ENCODE measurements at regions of chr2 and their contacts with region 1.

Region 1: GRCh38 chr2:118865106-118865505 is 17.7 kb upstream of the EN1 start:
- DNase-seq: peak; percentile 84
- H3K4me3 ChIP-seq: no peak overlapping the region
- H3K27ac ChIP-seq: no peak overlapping the region
- H3K4me1 ChIP-seq: peaks cover 19% of the 10 kb centered on the region
- H3K27me3 ChIP-seq: no peaks in the 10 kb centered on the region

Region 2: DNA sequence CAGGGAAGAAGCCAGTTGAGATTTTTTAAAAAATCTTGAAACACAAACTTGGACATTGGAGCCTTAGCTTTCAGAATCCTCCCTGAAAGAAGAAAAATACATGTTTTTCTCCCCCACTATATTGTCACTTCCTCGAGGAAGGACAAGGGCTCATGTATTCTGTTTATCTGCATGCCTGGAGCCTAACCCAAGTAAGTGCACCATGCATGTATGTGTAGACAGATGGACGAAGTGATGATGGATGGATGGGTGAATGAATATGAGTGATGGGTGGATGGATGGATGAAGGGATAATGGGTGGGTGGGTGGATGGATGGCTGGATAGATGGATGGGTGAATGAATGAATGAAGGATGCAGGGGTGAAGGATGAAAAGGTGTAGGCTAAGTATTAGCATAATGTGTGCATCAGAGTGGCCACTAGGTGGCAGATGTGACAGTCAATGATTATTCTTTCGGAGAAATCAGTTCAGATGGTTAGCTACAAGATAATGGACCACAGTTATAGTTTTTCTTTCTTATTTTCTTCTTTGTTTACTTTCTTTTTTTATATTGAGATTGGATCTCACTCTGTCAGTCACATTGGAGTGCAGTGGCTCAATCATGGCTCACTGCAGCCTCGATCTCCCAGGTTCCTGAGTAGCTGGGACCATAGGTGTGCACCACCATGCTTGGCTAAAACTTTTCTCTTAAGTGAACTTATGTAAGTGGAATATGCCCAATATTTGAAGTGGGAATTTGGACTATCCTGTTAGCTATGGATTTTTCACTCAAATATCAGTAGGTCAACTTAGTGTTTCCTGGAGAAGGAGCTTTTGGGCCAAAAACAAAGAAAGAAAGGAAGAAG is 832.7 kb before region 1 on chr2:
- in situ Hi-C with region 1: loop called (anchors 10 kb)
- DNase-seq: peak; percentile 69
- H3K4me3 ChIP-seq: no peak overlapping the region
- H3K27ac ChIP-seq: no peak overlapping the region
- H3K4me1 ChIP-seq: no peaks in the 10 kb centered on the region
- H3K27me3 ChIP-seq: peaks cover 27% of the 10 kb centered on the region

Region 3: GRCh38 chr2:118219611-118220010 is 645.5 kb before region 1 on chr2:
- in situ Hi-C with region 1: loop called (anchors 5 kb)
- DNase-seq: no peak
- H3K4me3 ChIP-seq: no peak overlapping the region
- H3K27ac ChIP-seq: no peak overlapping the region
- H3K4me1 ChIP-seq: peaks cover 12% of the 10 kb centered on the region
- H3K27me3 ChIP-seq: no peaks in the 10 kb centered on the region

Region 4: GRCh38 chr2:118371515-118371914 is 493.6 kb before region 1 on chr2:
- in situ Hi-C with region 1: loop called (anchors 5 kb)
- DNase-seq: peak; percentile 82
- H3K4me3 ChIP-seq: no peak overlapping the region
- H3K27ac ChIP-seq: no peak overlapping the region
- H3K4me1 ChIP-seq: peaks cover 12% of the 10 kb centered on the region
- H3K27me3 ChIP-seq: no peaks in the 10 kb centered on the region

Region 5: DNA sequence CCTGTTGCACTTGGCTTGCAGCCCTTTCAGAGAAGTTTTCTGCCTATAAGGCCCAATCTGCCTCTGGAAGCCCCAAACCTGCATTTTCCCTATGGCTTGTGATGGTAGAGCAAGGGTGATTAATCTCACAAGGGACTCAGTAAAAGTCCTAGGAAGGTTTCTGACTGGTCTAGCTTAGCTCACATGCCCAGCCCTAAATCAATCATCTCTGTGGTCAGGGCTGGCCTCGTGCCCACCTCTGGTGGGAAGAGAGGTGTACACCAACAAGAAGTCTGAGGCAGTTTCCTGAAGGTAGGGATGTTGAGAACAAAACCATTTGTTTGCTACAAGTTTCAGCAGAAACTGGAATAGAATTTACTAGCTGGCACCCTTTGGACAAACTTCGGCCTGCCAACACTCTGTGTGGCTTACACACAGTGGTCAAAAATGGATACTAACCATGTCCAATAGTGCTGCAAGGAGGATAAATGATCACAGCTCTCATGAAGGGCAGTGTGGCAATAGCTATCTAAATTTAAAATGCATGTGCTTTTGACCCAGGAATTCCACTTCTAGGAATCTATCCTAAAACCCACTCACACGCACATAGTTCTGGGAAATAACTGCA is 114.0 kb before region 1 on chr2:
- in situ Hi-C with region 1: no loop called
- DNase-seq: peak; percentile 45
- H3K4me3 ChIP-seq: no peak overlapping the region
- H3K27ac ChIP-seq: no peak overlapping the region
- H3K4me1 ChIP-seq: no peaks in the 10 kb centered on the region
- H3K27me3 ChIP-seq: no peaks in the 10 kb centered on the region

Measured in GM23248 (cell line).